Naive thymus-derived CD8-positive, alpha-beta T cell (primary cell): ENCODE measurements at regions of chr14 and their contacts with region 1.

Region 1: GRCh38 chr14:103713304-103714062 is 1.8 kb downstream of the XRCC3 start:
- DNase-seq: no peak
- ATAC-seq: no peak
- H3K4me3 Mint-ChIP-seq: peak overlapping the region in 9 of 10 donors; percentile 22 to 78 (median 71)
- H3K27ac Mint-ChIP-seq: peak overlapping the region in 6 of 10 donors; percentile 10 to 85 (median 19)
- H3K4me1 Mint-ChIP-seq: peaks cover 14 to 39% (median 36%) of the 10 kb centered on the region in 4 donors
- H3K27me3 Mint-ChIP-seq: no peaks in the 10 kb centered on the region

Region 2: GRCh38 chr14:103512701-103513611 is 200.5 kb before region 1 on chr14:
- POLR2A ChIA-PET with region 1: interaction called, 10 read pairs
- DNase-seq: no peak
- ATAC-seq: no peak
- H3K4me3 Mint-ChIP-seq: peak overlapping the region in 1 of 10 donors; percentile 48
- H3K27ac Mint-ChIP-seq: peak overlapping the region in 5 of 10 donors; percentile 2 to 61 (median 46)
- H3K4me1 Mint-ChIP-seq: peaks cover 0 to 15% (median 5%) of the 10 kb centered on the region in 4 donors
- H3K27me3 Mint-ChIP-seq: no peaks in the 10 kb centered on the region